Testis (tissue), 5 donors: ENCODE measurements at regions of chr5 and their contacts with region 1.

Region 1: GRCh38 chr5:146965761-146966659 is 87.5 kb upstream of the PPP2R2B start:
- DNase-seq: peak; percentile 82
- H3K4me3 ChIP-seq: no peak overlapping the region
- H3K27ac ChIP-seq: no peak overlapping the region
- H3K4me1 ChIP-seq: peaks cover 8% of the 10 kb centered on the region
- H3K27me3 ChIP-seq: no peaks in the 10 kb centered on the region
- CTCF ChIP-seq: peak; percentile 90 to 98 (median 95)
- POLR2A ChIP-seq: no peak

Region 2: GRCh38 chr5:146541958-146542849 is 423.8 kb before region 1 on chr5:
- intact Hi-C with region 1: loop called (anchors 10 kb)
- DNase-seq: peak; percentile 87
- H3K4me3 ChIP-seq: no peak overlapping the region
- H3K27ac ChIP-seq: no peak overlapping the region
- H3K4me1 ChIP-seq: no peaks in the 10 kb centered on the region
- H3K27me3 ChIP-seq: no peaks in the 10 kb centered on the region
- CTCF ChIP-seq: peak; percentile 55 to 73 (median 63)
- POLR2A ChIP-seq: no peak